A549 (cell line): ENCODE measurements at regions of chr2 and their contacts with region 1.

Region 1: GRCh38 chr2:65129826-65130663 is at the start of gene RAB1A:
- DNase-seq: peak; percentile 96 to 100
- ATAC-seq: peak; percentile 91 to 97
- H3K4me3 ChIP-seq: peak within 1 kb of the TSS; percentile 85
- H3K27ac ChIP-seq: peak within 1 kb of the TSS; percentile 95
- H3K4me1 ChIP-seq: peaks cover 42% of the 10 kb centered on the region
- CTCF ChIP-seq: peak; percentile 42
- EP300 ChIP-seq: no peak
- POLR2A ChIP-seq: peak; percentile 78
- RAD21 ChIP-seq: peak in 1 of 2 experiments; percentile 46; a peak in 2 of 5 replicates
- polyA plus RNA-seq, gene RAB1A: 351 and 417 TPM in 2 replicates

Region 2: DNA sequence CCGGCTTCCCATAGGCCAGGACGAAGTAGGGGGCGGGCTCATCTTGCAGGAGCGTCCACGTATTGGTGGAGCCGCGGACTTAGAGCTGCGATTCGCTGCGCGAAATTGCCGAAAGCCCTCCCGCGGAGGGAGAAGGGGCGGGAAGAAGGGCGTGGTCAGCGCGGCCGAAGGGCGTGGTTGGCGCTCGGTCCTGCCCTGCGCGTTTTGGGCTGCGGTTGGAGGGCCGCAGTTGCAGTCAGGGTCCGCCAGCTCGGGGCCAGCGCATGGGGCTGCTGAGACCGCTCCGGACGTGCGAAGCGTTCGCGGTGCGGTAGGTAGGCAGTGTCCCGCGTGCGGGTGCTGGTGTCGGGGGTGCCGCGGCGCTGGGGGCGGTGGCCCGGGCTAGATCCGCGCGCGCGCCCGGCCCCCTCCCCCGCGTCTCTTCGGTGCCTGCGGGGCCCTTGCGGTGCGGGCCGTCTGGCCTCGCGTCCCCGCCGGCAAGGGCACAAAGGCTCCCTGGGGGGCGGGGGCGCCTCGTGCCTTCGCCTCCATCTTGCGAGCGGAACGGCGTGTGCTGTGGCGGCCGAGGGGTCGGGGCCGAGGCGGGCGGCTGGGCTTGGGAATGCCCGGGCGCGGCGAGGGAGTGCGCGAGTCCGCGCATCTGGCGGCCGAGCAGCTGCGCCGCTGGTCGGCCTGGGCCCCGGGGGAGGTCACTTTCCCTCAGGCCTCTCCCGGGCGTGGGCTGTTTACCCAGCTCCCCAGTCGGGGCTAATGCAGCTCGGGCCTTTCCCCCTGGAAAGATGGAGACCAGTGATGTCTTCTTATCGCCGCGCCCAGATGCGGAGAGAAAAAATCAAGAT is 73.6 kb before region 1 on chr2 and contains the start of gene CEP68:
- CTCF ChIA-PET with region 1: interaction called, 4 read pairs
- POLR2A ChIA-PET with region 1: interaction called, 18 read pairs
- DNase-seq: peak; percentile 98 to 99
- ATAC-seq: peak; percentile 92 to 99
- H3K4me3 ChIP-seq: peak within 1 kb of the TSS; percentile 67
- H3K27ac ChIP-seq: peak within 1 kb of the TSS; percentile 81 to 93
- H3K4me1 ChIP-seq: peaks cover 16% of the 10 kb centered on the region
- CTCF ChIP-seq: no peak
- EP300 ChIP-seq: no peak
- POLR2A ChIP-seq: peak; percentile 97
- RAD21 ChIP-seq: no peak
- polyA plus RNA-seq, gene CEP68: 9.2 and 9.3 TPM in 2 replicates

Region 3: GRCh38 chr2:65070172-65070830 is 59.7 kb before region 1 on chr2:
- CTCF ChIA-PET with region 1: interaction called, 10 read pairs
- POLR2A ChIA-PET with region 1: interaction called, 19 read pairs
- DNase-seq: peak in 1 of 2 experiments; percentile 50
- ATAC-seq: peak; percentile 44 to 62
- H3K4me3 ChIP-seq: no peak overlapping the region
- H3K27ac ChIP-seq: peak overlapping the region; percentile 3 to 58; a peak in 4 of 6 replicates
- H3K4me1 ChIP-seq: peaks cover 36% of the 10 kb centered on the region
- CTCF ChIP-seq: no peak
- EP300 ChIP-seq: no peak
- POLR2A ChIP-seq: no peak
- RAD21 ChIP-seq: no peak

Region 4: DNA sequence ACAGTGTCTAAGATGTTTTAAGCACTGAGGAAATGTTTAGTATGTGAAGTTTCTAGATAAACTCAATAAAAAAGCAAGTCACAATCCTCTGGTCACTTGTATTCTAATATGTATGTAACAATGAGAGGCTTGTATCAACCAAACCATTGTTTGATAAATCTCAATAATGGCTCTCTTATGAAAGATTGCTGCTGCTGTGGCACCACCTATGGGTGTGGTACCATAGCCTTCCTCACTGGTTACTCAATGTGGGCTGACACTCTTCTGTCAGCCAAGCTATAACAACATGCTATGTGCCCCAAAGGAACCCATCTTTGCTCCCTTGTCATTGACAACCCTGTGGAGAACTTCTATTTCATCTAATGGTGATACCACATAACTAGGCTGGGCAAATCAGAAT is 12.5 kb after region 1 on chr2:
- CTCF ChIA-PET with region 1: interaction called, 20 read pairs
- POLR2A ChIA-PET with region 1: interaction called, 12 read pairs
- DNase-seq: peak in 1 of 2 experiments; percentile 51
- ATAC-seq: peak; percentile 89 to 91
- H3K4me3 ChIP-seq: no peak overlapping the region
- H3K27ac ChIP-seq: no peak overlapping the region
- H3K4me1 ChIP-seq: no peaks in the 10 kb centered on the region
- CTCF ChIP-seq: peak; percentile 36
- EP300 ChIP-seq: no peak
- POLR2A ChIP-seq: no peak
- RAD21 ChIP-seq: peak; percentile 42 to 58; a peak in 4 of 5 replicates

Region 5: GRCh38 chr2:65227425-65228262 is 97.6 kb after region 1 on chr2 and contains the start of gene ACTR2:
- CTCF ChIA-PET with region 1: interaction called, 10 read pairs
- POLR2A ChIA-PET with region 1: interaction called, 41 read pairs
- DNase-seq: peak; percentile 86 to 98
- ATAC-seq: peak; percentile 97
- H3K4me3 ChIP-seq: peak within 1 kb of the TSS; percentile 94
- H3K27ac ChIP-seq: peak within 1 kb of the TSS; percentile 95 to 98
- H3K4me1 ChIP-seq: peaks cover 43% of the 10 kb centered on the region
- CTCF ChIP-seq: no peak
- EP300 ChIP-seq: peak in 1 of 2 experiments; percentile 18; a peak in 1 of 5 replicates
- POLR2A ChIP-seq: peak; percentile 90
- RAD21 ChIP-seq: no peak
- polyA plus RNA-seq, gene ACTR2: 233 and 270 TPM in 2 replicates